PC-9 (cell line): ENCODE measurements at regions of chrX and their contacts with region 1.

Region 1: GRCh38 chrX:30735839-30736238 is 82.6 kb downstream of the GK start:
- DNase-seq: peak in 1 of 2 experiments; percentile 51
- H3K4me3 ChIP-seq: no peak overlapping the region
- H3K27ac ChIP-seq: no peak overlapping the region
- H3K4me1 ChIP-seq: no peaks in the 10 kb centered on the region
- H3K27me3 ChIP-seq: no peaks in the 10 kb centered on the region
- CTCF ChIP-seq: peak; percentile 84

Region 2: DNA sequence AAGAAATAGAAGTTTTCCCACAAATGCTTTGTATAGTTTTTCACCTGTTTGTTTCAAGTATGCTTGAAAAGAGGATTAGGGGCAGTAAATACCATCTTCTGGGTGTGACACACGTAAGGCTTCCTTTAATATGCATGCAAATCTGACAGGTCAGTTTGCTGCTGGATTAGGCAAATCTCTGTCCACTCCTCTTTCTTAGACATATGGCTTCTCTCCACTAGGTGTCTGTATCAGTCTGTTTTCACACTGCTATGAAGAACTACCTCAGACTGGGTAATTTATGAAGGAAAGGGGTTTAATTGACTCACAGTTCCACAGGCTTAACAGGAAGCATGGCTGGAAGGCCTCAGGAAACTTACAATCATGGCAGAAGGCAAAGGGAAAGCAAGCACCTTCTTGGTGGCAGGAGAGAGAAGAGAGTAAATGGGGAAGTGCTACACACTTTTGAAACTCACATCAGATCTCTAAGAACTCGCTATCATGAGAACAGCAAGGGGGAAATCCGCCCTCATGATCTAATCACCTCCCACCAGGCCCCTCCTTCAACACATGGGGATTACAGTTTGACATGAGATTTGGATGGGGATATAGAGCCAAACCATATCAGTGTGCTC is 86.3 kb after region 1 on chrX:
- CTCF ChIA-PET with region 1: no interaction called
- POLR2A ChIA-PET with region 1: no interaction called
- intact Hi-C with region 1: loop called (anchors 5 kb)
- DNase-seq: no peak
- H3K4me3 ChIP-seq: no peak overlapping the region
- H3K27ac ChIP-seq: no peak overlapping the region
- H3K4me1 ChIP-seq: no peaks in the 10 kb centered on the region
- H3K27me3 ChIP-seq: no peaks in the 10 kb centered on the region
- CTCF ChIP-seq: no peak; the same call in 1 of the 2 replicates

Region 3: GRCh38 chrX:30889147-30890140 is 153.6 kb after region 1 on chrX and contains the start of gene TAB3:
- CTCF ChIA-PET with region 1: no interaction called
- POLR2A ChIA-PET with region 1: no interaction called
- intact Hi-C with region 1: no loop called
- DNase-seq: peak; percentile 95 to 96
- H3K4me3 ChIP-seq: peak within 1 kb of the TSS; percentile 89
- H3K27ac ChIP-seq: peak within 1 kb of the TSS; percentile 77
- H3K4me1 ChIP-seq: peaks cover 53% of the 10 kb centered on the region
- H3K27me3 ChIP-seq: no peaks in the 10 kb centered on the region
- CTCF ChIP-seq: no peak
- total RNA-seq, gene TAB3: 46.7 and 50.8 TPM in 2 replicates